GM12878 (cell line): ENCODE measurements at regions of chr5 and their contacts with region 1.

Region 1: GRCh38 chr5:89282554-89283510 is 399.8 kb upstream of the MEF2C start:
- DNase-seq: peak; percentile 31
- ATAC-seq: peak; percentile 54
- H3K4me3 ChIP-seq: no peak overlapping the region
- H3K27ac ChIP-seq: peak overlapping the region; percentile 59
- H3K4me1 ChIP-seq: peaks cover 40% of the 10 kb centered on the region
- H3K27me3 ChIP-seq: no peaks in the 10 kb centered on the region
- CTCF ChIP-seq: no peak
- EP300 ChIP-seq: peak in 1 of 2 experiments; percentile 30; a peak in 1 of 4 replicates
- POLR2A ChIP-seq: no peak
- RAD21 ChIP-seq: peak; percentile 1; the same call in 1 of the 2 replicates

Region 2: GRCh38 chr5:89293810-89294209 is 11.0 kb after region 1 on chr5:
- CTCF ChIA-PET with region 1: interaction called, 17 read pairs
- POLR2A ChIA-PET with region 1: interaction called, 3 read pairs
- RAD21 ChIA-PET with region 1: interaction called, 6 read pairs
- SMC1A ChIA-PET with region 1: interaction called, 16 read pairs
- in situ Hi-C with region 1: no loop called
- intact Hi-C with region 1: no loop called
- DNase-seq: no peak
- ATAC-seq: peak; percentile 34; the same call in 1 of the 3 replicates
- H3K4me3 ChIP-seq: no peak overlapping the region
- H3K27ac ChIP-seq: no peak overlapping the region
- H3K4me1 ChIP-seq: peaks cover 12% of the 10 kb centered on the region; the same call in 1 of the 2 replicates
- H3K27me3 ChIP-seq: no peaks in the 10 kb centered on the region
- CTCF ChIP-seq: no peak
- EP300 ChIP-seq: no peak
- POLR2A ChIP-seq: no peak
- RAD21 ChIP-seq: no peak